B cell (primary cell): ENCODE measurements at regions of chr14 and their contacts with region 1.

Region 1: GRCh38 chr14:93892923-93893558 is 34.1 kb upstream of the FAM181A start:
- DNase-seq: peak; percentile 67
- ATAC-seq: peak; percentile 45
- H3K4me3 ChIP-seq: no peak overlapping the region
- H3K4me3 Mint-ChIP-seq: no peak overlapping the region
- H3K27ac ChIP-seq: no peak overlapping the region
- H3K27ac Mint-ChIP-seq: no peak overlapping the region
- H3K4me1 ChIP-seq: no peaks in the 10 kb centered on the region
- H3K4me1 Mint-ChIP-seq: no peaks in the 10 kb centered on the region
- H3K27me3 ChIP-seq: peaks cover 0 to 9% (median 1%) of the 10 kb centered on the region in 4 experiments
- H3K27me3 Mint-ChIP-seq: peaks cover 36% of the 10 kb centered on the region
- CTCF ChIP-seq: peak; percentile 99

Region 2: GRCh38 chr14:93582516-93582915 is 310.5 kb before region 1 on chr14:
- CTCF ChIA-PET with region 1: no interaction called
- POLR2A ChIA-PET with region 1: no interaction called
- intact Hi-C with region 1: no loop called
- DNase-seq: no peak
- ATAC-seq: no peak
- H3K4me3 ChIP-seq: no peak overlapping the region
- H3K4me3 Mint-ChIP-seq: no peak overlapping the region
- H3K27ac ChIP-seq: no peak overlapping the region
- H3K27ac Mint-ChIP-seq: no peak overlapping the region
- H3K4me1 ChIP-seq: no peaks in the 10 kb centered on the region
- H3K4me1 Mint-ChIP-seq: no peaks in the 10 kb centered on the region
- H3K27me3 ChIP-seq: peaks cover 0 to 2% (median 0%) of the 10 kb centered on the region in 4 experiments
- H3K27me3 Mint-ChIP-seq: no peaks in the 10 kb centered on the region
- CTCF ChIP-seq: no peak

Region 3: DNA sequence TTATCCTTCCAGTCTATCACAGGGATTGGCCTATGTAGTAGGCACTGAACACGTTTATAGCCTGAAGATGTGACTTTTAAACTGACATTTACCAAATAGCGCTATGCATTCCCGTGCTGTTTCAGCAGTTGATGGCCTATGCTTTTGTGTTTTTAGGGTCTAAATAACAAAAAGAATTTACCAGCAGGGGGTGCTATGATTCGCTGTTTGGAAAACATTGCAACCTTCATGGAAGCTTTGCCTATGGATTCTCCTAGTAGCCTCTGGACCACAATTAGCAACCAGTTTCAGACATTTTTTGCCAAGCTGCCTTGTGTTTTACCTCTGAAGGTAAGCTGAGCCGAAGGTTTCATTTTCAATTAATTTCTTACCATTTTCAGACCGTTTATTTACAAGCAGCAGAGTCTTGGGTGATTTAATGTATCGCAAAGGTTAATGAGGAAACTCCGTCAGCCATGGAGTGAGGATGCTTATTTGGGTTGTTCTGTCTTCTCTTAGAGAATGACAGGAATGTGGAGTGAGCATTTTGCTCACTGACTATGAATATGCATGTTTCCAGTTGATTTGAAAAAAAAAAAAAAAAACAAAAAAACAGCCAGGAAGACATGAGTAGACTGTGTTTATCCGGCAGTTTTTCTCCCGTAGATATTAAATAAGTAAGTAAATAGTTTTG is 237.8 kb before region 1 on chr14:
- CTCF ChIA-PET with region 1: interaction called, 4 read pairs
- POLR2A ChIA-PET with region 1: no interaction called
- intact Hi-C with region 1: loop called (anchors 10 kb)
- DNase-seq: peak; percentile 12
- ATAC-seq: no peak
- H3K4me3 ChIP-seq: no peak overlapping the region
- H3K4me3 Mint-ChIP-seq: no peak overlapping the region
- H3K27ac ChIP-seq: no peak overlapping the region
- H3K27ac Mint-ChIP-seq: no peak overlapping the region
- H3K4me1 ChIP-seq: no peaks in the 10 kb centered on the region
- H3K4me1 Mint-ChIP-seq: no peaks in the 10 kb centered on the region
- H3K27me3 ChIP-seq: peaks cover 0 to 12% (median 5%) of the 10 kb centered on the region in 4 experiments
- H3K27me3 Mint-ChIP-seq: peaks cover 27% of the 10 kb centered on the region
- CTCF ChIP-seq: peak; percentile 56

Region 4: DNA sequence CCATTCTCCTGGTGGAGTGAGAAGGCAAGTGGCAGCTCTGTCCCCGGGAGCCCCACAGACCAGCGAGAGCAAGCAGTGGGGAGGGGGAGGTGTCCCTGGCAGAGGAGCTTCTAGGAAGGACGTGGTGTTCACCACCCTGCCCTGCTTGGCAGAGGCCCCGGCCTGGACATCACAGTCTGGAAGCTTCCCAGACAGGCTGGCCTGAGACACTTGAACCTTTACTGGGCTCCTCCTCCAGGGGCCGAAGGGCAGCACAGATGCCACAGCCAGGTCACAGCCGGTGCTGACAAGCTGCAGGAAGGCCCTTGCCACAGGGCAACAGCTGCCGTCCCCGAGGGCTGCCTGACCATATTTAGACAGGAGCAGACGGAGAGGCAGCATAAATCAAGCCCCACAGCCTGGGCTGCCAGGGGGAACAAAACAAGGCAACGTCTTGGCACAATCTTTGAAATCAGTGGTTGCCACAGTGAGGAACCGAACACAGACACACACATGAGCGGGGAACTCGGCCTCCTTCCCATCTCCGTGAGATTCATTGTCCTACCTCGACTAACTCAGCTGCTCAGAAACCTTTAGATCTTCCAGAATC is 133.2 kb before region 1 on chr14:
- CTCF ChIA-PET with region 1: no interaction called
- POLR2A ChIA-PET with region 1: no interaction called
- intact Hi-C with region 1: no loop called
- DNase-seq: no peak
- ATAC-seq: no peak
- H3K4me3 ChIP-seq: no peak overlapping the region
- H3K4me3 Mint-ChIP-seq: no peak overlapping the region
- H3K27ac ChIP-seq: no peak overlapping the region
- H3K27ac Mint-ChIP-seq: no peak overlapping the region
- H3K4me1 ChIP-seq: no peaks in the 10 kb centered on the region
- H3K4me1 Mint-ChIP-seq: no peaks in the 10 kb centered on the region
- H3K27me3 ChIP-seq: peaks cover 0 to 7% (median 0%) of the 10 kb centered on the region in 4 experiments
- H3K27me3 Mint-ChIP-seq: peaks cover 22% of the 10 kb centered on the region
- CTCF ChIP-seq: no peak

Region 5: GRCh38 chr14:94077111-94077821 is 184.2 kb after region 1 on chr14:
- CTCF ChIA-PET with region 1: no interaction called
- POLR2A ChIA-PET with region 1: no interaction called
- intact Hi-C with region 1: no loop called
- DNase-seq: no peak
- ATAC-seq: no peak
- H3K4me3 ChIP-seq: peak overlapping the region in 1 of 5 experiments; percentile 16
- H3K4me3 Mint-ChIP-seq: peak overlapping the region; percentile 82
- H3K27ac ChIP-seq: no peak overlapping the region
- H3K27ac Mint-ChIP-seq: no peak overlapping the region
- H3K4me1 ChIP-seq: peaks cover 36 to 45% of the 10 kb centered on the region in 2 donors
- H3K4me1 Mint-ChIP-seq: peaks cover 56% of the 10 kb centered on the region
- H3K27me3 ChIP-seq: no peaks in the 10 kb centered on the region
- H3K27me3 Mint-ChIP-seq: no peaks in the 10 kb centered on the region
- CTCF ChIP-seq: no peak